ENCODE measurements at regions of chr3 and their contacts with region 1.

Region 1: GRCh38 chr3:155870133-155870944 is at the start of gene GMPS:
- DNase-seq: peak; percentile 97
- H3K4me3 Mint-ChIP-seq: peak within 1 kb of the TSS; percentile 92
- H3K27ac Mint-ChIP-seq: peak within 1 kb of the TSS; percentile 88
- H3K4me1 Mint-ChIP-seq: peaks cover 25% of the 10 kb centered on the region
- H3K27me3 Mint-ChIP-seq: no peaks in the 10 kb centered on the region
- total RNA-seq, gene GMPS: 143 to 152 TPM

Region 2: DNA sequence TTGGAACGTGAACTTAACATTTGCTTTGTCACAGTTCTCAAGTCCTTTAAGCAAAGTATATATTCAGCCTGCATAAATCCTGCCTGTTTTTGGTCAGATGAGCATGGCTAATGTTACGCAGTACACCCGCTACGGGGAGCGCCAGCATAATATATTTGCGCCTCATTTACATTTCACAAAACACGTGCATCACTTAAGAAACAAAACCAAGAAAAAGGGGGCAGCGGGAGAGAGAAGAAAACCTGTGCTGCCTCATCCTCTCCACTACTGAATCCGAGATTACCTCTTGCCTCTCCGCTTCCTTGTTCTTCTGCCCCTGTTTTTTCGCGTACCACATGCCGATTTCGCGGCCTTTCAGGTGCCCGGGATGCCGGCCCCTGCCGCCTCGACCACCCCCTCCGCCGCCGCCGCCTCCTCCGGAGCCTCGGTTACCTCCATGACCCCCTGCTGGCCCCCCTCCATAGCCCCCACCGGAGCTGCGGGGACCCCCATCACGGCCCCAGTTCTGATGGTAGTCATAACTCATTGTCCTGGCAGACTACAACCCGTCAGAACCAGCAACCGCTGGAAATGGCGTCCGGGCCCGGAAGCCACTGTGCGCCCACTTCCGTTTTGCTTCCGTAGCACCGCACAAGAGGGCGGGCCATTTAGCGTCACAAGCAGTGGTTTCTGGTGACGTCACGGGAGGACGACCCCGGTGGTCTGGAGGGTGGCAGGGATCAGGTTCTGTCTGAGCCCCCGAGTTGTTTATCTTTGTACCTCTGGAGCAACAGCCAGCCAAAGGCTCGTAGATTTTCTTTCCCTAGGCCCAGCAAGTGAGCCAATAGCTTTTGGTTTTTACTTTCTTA is 1546.2 kb before region 1 on chr3 and contains the start of gene DHX36:
- CTCF ChIA-PET with region 1: no interaction called
- POLR2A ChIA-PET with region 1: no interaction called
- intact Hi-C with region 1: loop called (anchors 5 kb)
- DNase-seq: peak; percentile 93
- H3K4me3 Mint-ChIP-seq: peak within 1 kb of the TSS; percentile 85
- H3K27ac Mint-ChIP-seq: peak within 1 kb of the TSS; percentile 96
- H3K4me1 Mint-ChIP-seq: peaks cover 29% of the 10 kb centered on the region
- H3K27me3 Mint-ChIP-seq: no peaks in the 10 kb centered on the region
- total RNA-seq, gene DHX36: 65.5 to 71.1 TPM

Region 3: DNA sequence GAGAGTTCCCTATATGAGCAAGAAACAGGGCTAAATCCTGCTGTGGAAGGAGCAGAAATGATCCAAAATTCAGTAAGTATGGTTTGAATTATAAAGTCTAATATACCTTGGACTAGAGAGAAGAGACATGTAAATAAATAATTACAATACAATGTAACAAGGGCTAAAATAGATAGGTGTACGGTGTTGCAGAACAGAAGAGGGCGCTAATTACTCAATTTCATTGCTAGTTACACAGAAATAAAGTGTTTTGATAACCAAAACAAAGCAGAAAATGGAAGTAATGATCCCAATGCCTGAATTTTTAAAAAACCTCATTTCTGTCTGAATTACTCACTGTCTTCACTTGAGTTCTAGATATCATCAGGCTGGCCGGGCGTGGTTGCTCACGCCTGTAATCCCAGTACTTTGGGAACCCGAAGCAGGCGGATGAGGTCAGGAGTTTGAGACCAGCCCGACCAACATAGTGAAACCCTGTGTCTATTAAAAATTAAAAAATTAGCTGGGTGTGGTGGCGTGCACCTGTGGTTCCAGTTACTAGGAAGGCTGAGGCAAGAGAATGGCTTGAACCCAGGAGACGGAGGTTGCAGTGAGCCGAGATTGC is 117.2 kb before region 1 on chr3:
- CTCF ChIA-PET with region 1: no interaction called
- POLR2A ChIA-PET with region 1: no interaction called
- intact Hi-C with region 1: loop called (anchors 1 kb)
- DNase-seq: no peak
- H3K4me3 Mint-ChIP-seq: no peak overlapping the region
- H3K27ac Mint-ChIP-seq: no peak overlapping the region
- H3K4me1 Mint-ChIP-seq: no peaks in the 10 kb centered on the region
- H3K27me3 Mint-ChIP-seq: no peaks in the 10 kb centered on the region

Region 4: DNA sequence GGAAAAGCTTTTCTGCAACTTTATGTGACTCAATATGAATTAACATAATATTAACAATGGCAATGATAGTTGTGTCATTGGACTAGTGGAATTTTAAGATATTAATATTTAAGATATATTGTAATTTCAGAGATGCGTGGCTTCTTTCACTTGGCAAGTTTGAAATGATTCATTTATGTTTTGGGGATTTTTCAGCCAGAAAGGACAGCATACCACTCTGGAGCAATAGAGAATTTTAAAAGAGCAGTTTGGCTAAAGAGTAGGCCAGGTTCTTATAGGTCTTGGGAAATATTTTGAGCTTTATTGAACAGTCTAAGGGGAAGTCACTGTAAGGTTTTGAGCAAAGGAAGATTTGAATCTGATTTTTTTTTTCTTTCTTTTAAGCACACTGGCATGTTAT is 16.6 kb after region 1 on chr3:
- CTCF ChIA-PET with region 1: no interaction called
- POLR2A ChIA-PET with region 1: interaction called, 3 read pairs
- intact Hi-C with region 1: loop called (anchors 2 kb)
- DNase-seq: no peak
- H3K4me3 Mint-ChIP-seq: no peak overlapping the region
- H3K27ac Mint-ChIP-seq: peak overlapping the region; percentile 48
- H3K4me1 Mint-ChIP-seq: peaks cover 44% of the 10 kb centered on the region
- H3K27me3 Mint-ChIP-seq: no peaks in the 10 kb centered on the region